ENCODE measurements at regions of chr10 and their contacts with region 1.

Region 1: DNA sequence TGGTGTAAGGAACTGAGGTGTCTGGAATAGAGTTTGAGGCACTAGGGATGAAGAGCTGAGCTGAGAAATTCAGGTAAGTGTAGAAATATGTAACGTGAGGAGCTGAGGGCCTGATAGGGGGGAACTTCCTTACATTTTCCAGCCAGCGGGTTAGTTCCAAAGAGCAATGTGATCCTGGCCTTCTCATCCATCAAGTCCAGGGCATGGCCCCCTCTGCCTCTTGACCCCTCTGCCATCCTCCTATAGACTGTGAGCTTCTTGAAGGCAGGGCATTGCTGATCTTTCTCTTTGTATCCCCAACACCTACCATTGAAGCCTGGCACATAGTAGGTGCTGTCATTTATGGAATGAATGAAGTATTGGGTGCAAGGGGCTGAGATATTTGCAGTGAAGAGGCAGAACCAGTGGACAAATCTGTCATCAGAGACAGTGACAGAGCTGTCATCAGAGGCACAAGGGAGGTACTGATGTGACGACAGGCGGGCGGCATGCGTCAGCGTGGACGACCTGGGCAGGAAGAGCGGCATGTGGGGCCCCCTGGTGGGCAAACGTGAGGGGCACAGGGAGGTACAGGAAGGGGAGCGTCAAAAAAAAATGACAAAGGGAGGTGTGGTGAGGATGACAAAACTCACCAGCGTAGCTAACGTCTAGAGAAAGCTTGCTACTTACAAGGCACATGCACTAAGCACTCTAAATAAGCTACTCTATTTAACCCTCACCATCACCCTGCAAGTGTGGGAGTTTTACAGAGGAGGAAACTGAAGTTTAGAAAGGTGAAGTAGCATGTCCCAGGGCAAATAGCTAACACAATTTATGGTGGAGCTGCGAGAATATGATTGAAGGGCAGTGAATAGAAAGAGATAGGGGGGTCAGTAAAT is 5.2 kb upstream of the CAMK2G start:
- DNase-seq: peak; percentile 98
- H3K4me3 ChIP-seq: no peak overlapping the region
- H3K27ac ChIP-seq: peak overlapping the region in 3 of 8 donors; percentile 29 to 46 (median 37)
- H3K4me1 ChIP-seq: peaks cover 0 to 34% (median 20%) of the 10 kb centered on the region in 6 donors
- H3K27me3 ChIP-seq: no peaks in the 10 kb centered on the region
- CTCF ChIP-seq: peak; percentile 98 to 100 (median 99)
- POLR2A ChIP-seq: no peak

Region 2: DNA sequence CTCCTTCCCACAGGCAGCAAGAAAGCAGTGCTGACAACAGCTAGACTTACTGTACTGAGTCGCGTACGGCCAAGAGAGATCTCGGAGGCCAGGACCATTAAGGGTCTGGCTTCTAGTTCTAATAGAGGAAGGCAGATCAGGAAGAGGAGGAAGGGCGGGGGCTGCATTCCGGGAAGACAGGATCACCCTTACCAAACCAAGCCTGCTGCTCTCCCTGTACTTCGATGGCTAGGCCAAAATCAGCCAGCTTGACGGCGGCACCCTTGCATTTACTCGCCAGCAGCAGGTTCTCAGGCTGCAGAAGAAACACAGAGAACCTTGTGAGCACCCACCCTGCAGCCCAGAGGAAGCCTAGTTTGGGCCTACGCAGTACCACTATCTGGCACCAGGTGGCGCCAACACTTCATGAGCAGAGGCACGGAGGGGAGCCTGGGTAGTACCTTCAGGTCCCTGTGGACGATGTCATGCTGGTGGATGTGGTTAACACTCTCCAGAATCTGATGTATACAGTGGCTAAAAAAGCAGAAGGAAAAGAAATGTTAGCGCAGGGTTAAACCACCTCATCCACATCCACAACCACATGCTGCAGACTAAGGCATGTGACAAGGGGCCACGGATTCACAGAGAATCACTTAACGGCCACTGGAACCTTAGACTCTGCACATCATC is 30.6 kb before region 1 on chr10:
- intact Hi-C with region 1: loop called (anchors 5 kb)
- DNase-seq: peak; percentile 96
- H3K4me3 ChIP-seq: peak overlapping the region in 1 of 8 donors; percentile 27
- H3K27ac ChIP-seq: peak overlapping the region in 7 of 8 donors; percentile 16 to 74 (median 60)
- H3K4me1 ChIP-seq: peaks cover 12 to 40% (median 25%) of the 10 kb centered on the region in 6 donors
- H3K27me3 ChIP-seq: no peaks in the 10 kb centered on the region
- CTCF ChIP-seq: peak; percentile 99 to 100 (median 100)
- POLR2A ChIP-seq: no peak

Measured in spleen (tissue), 13 donors.